ENCODE measurements at regions of chr18 and their contacts with region 1.

Region 1: GRCh38 chr18:50287441-50288347 is at the start of gene CXXC1:
- DNase-seq: peak; percentile 88
- ATAC-seq: peak; percentile 87
- H3K4me3 Mint-ChIP-seq: peak within 1 kb of the TSS; percentile 99
- H3K27ac Mint-ChIP-seq: peak within 1 kb of the TSS; percentile 95
- H3K4me1 Mint-ChIP-seq: peaks cover 23% of the 10 kb centered on the region
- H3K27me3 Mint-ChIP-seq: no peaks in the 10 kb centered on the region
- CTCF ChIP-seq: no peak
- total RNA-seq, gene CXXC1: 126 and 134 TPM in 2 replicates

Region 2: GRCh38 chr18:50247561-50247960 is 40.1 kb before region 1 on chr18:
- CTCF ChIA-PET with region 1: no interaction called
- POLR2A ChIA-PET with region 1: no interaction called
- intact Hi-C with region 1: no loop called
- DNase-seq: no peak
- ATAC-seq: no peak
- H3K4me3 Mint-ChIP-seq: no peak overlapping the region
- H3K27ac Mint-ChIP-seq: no peak overlapping the region
- H3K4me1 Mint-ChIP-seq: no peaks in the 10 kb centered on the region
- H3K27me3 Mint-ChIP-seq: peaks cover 3% of the 10 kb centered on the region
- CTCF ChIP-seq: no peak

Region 3: DNA sequence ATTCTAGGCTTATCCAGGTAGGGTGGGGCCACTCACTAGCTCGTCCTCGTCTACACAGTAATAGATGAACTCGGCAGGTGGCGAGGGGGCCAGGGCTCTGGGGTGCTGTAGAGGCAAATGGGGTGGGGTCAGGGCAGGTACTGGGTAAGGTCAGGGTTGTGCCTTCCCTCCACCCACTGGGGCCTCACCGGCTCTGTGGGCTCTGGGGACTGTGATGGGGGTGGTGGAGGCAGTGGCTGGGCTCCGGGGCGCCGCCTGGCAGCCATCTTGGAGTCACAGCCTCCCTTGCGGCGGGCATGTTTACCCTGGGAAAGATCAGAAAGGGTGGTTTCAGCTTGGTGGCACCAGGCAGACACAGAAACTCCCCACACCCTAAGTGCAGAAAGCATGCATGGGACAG is 12.8 kb before region 1 on chr18:
- CTCF ChIA-PET with region 1: no interaction called
- POLR2A ChIA-PET with region 1: no interaction called
- intact Hi-C with region 1: no loop called
- DNase-seq: no peak
- ATAC-seq: no peak
- H3K4me3 Mint-ChIP-seq: no peak overlapping the region
- H3K27ac Mint-ChIP-seq: no peak overlapping the region
- H3K4me1 Mint-ChIP-seq: peaks cover 14% of the 10 kb centered on the region
- H3K27me3 Mint-ChIP-seq: no peaks in the 10 kb centered on the region
- CTCF ChIP-seq: no peak

Region 4: DNA sequence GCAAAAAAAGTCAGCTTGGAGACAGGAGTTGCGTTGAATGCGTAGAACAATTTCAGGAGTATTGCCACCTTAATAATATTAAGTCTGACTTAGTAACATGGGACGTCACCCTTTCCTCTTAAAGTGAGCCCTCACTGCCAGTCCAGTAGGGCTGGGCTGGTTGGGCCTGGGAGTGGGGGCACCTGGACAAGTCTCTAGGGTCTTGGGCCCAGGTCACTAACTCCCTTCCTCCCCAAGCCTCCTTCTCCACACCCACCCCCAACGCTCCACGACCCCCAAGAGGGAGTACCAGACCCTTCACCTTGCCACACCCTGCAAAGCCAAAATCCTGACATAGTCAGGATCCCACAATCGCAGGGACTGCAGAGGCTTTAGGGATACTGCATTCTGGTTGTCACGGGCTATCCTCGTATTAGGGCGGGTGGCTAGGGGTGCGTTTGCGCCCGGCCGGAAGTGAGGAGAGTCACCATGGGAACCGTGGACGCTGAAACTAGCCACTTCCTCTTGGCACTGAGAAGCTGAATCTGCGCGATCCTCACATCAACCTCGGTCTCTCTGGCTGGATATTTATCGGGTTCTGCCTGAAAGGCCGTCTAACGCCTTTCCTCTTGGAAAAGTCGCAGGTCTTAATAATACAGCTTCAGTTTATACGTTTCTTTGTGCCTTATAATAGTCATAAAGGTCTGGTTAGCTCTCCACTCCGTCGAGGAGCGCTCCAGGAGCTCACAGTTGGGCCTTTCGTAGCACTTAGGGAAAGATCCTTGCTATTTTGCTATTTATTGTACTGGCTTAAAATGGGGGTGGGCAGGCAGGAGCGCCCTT is 10.1 kb after region 1 on chr18:
- CTCF ChIA-PET with region 1: no interaction called
- POLR2A ChIA-PET with region 1: no interaction called
- intact Hi-C with region 1: loop called (anchors 1 kb)
- DNase-seq: peak; percentile 73
- ATAC-seq: peak; percentile 99
- H3K4me3 Mint-ChIP-seq: peak overlapping the region; percentile 83
- H3K27ac Mint-ChIP-seq: peak overlapping the region; percentile 41
- H3K4me1 Mint-ChIP-seq: peaks cover 14% of the 10 kb centered on the region
- H3K27me3 Mint-ChIP-seq: no peaks in the 10 kb centered on the region
- CTCF ChIP-seq: no peak

Region 5: GRCh38 chr18:50307738-50308470 is 20.2 kb after region 1 on chr18:
- CTCF ChIA-PET with region 1: no interaction called
- POLR2A ChIA-PET with region 1: interaction called, 4 read pairs
- intact Hi-C with region 1: loop called (anchors 1 kb)
- DNase-seq: peak; percentile 68
- ATAC-seq: peak; percentile 97
- H3K4me3 Mint-ChIP-seq: peak overlapping the region; percentile 88
- H3K27ac Mint-ChIP-seq: peak overlapping the region; percentile 66
- H3K4me1 Mint-ChIP-seq: peaks cover 46% of the 10 kb centered on the region
- H3K27me3 Mint-ChIP-seq: no peaks in the 10 kb centered on the region
- CTCF ChIP-seq: no peak

Region 6: DNA sequence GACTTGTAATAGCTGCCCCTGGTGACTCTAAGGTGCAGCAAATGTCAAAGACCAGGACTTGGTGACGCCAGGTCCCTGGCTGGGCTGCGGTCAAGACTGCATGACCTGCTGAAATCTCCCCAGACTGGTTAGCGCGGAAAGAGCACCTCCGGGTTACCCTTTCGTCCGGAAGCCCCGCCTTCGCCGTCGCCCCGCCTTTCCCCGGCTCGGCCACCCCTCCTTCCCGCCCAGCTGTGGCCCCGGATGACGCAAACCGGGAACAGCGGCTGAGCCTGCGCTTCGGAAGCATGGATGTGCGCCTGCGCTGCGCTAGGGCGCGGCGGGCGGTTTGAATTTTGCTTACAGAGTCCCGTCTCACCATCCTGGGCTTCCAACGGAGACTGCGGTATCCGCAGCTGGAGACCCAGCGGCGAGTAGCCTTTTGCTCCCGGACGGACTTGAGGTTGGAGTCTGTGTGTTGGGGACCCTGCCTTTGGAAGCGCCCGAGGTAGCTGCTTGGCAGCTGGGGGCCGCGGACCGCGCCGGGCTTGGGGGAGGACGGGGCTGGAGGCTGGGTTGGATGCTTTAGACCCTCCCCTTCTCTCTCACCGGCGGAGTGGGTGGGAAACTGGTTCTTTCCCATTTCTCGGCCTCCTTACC is 87.2 kb after region 1 on chr18 and contains the start of gene SKA1:
- CTCF ChIA-PET with region 1: no interaction called
- POLR2A ChIA-PET with region 1: no interaction called
- intact Hi-C with region 1: loop called (anchors 1 kb)
- DNase-seq: peak; percentile 85
- ATAC-seq: peak; percentile 100
- H3K4me3 Mint-ChIP-seq: peak within 1 kb of the TSS; percentile 83
- H3K27ac Mint-ChIP-seq: peak within 1 kb of the TSS; percentile 84
- H3K4me1 Mint-ChIP-seq: peaks cover 14% of the 10 kb centered on the region
- H3K27me3 Mint-ChIP-seq: peaks cover 6% of the 10 kb centered on the region
- CTCF ChIP-seq: no peak
- total RNA-seq, gene SKA1: 0.71 and 1.0 TPM in 2 replicates

Region 7: DNA sequence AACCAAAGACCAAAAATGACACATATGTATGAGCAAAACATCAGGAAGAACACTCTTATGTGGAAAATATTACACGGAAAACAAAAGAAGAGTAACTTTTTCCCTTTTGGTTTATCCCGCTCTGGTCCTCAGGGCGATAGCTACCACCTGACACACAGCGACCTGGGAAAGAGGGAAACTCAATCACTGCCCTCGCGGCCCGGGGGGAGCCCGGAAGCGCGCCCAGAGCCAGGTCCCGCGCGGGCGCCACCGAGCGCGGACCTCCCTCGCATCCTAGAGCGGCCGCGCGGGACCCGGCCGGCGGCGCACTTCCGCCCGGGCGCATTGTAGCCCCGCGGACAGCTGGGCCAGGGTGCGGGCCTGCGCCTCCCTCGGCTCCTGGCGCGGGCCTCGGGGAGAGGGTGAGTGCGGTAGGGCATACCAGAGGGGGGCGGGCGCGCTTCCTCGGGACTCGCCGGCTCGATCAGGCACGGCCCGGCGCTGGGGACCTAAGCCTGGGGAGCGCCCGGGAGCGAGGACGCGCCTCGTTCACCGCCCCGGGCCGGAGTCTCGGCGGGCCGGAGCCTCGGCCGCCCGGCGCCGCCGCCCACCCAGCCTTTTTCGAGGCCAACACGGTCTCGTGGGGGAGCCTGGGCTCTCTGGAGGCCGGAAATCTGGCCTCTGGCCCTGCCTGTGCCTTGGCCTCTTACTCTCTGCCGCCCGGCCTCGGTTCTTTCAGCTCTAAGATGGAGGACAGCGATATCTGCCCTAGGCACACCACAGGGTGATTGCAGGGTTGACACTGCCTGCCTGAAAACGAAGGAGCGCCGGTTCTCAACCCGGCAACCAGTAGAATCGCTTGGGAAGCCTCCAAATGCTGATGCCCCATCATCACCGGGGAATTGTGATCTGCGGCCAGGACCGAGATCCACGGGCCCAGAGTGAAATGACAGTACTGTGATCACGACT is 680.3 kb after region 1 on chr18 and contains the start of gene ELAC1:
- CTCF ChIA-PET with region 1: no interaction called
- POLR2A ChIA-PET with region 1: no interaction called
- intact Hi-C with region 1: loop called (anchors 5 kb)
- DNase-seq: peak; percentile 75
- ATAC-seq: peak; percentile 95
- H3K4me3 Mint-ChIP-seq: peak within 1 kb of the TSS; percentile 92
- H3K27ac Mint-ChIP-seq: peak within 1 kb of the TSS; percentile 89
- H3K4me1 Mint-ChIP-seq: peaks cover 11% of the 10 kb centered on the region
- H3K27me3 Mint-ChIP-seq: no peaks in the 10 kb centered on the region
- CTCF ChIP-seq: no peak
- total RNA-seq, gene ELAC1: 9.7 and 14.0 TPM in 2 replicates

Measured in activated B cell treated with CpG ODN at 0.5 μM for 24 hours (primary cell).